ENCODE measurements at regions of chr18 and their contacts with region 1.

Region 1: GRCh38 chr18:37259711-37260110 is 305.9 kb downstream of the CELF4 start:
- DNase-seq: no peak
- H3K4me3 ChIP-seq: no peak overlapping the region
- H3K27ac ChIP-seq: no peak overlapping the region
- H3K4me1 ChIP-seq: peaks cover 1% of the 10 kb centered on the region
- H3K27me3 ChIP-seq: no peaks in the 10 kb centered on the region
- CTCF ChIP-seq: no peak
- POLR2A ChIP-seq: no peak

Region 2: GRCh38 chr18:36872329-36872728 is 387.4 kb before region 1 on chr18:
- intact Hi-C with region 1: no loop called
- DNase-seq: no peak
- H3K4me3 ChIP-seq: no peak overlapping the region
- H3K27ac ChIP-seq: no peak overlapping the region
- H3K4me1 ChIP-seq: no peaks in the 10 kb centered on the region
- H3K27me3 ChIP-seq: no peaks in the 10 kb centered on the region
- CTCF ChIP-seq: no peak
- POLR2A ChIP-seq: no peak

Region 3: GRCh38 chr18:37065254-37065653 is 194.5 kb before region 1 on chr18:
- intact Hi-C with region 1: no loop called
- DNase-seq: no peak
- H3K4me3 ChIP-seq: no peak overlapping the region
- H3K27ac ChIP-seq: no peak overlapping the region
- H3K4me1 ChIP-seq: no peaks in the 10 kb centered on the region
- H3K27me3 ChIP-seq: no peaks in the 10 kb centered on the region
- CTCF ChIP-seq: no peak
- POLR2A ChIP-seq: no peak

Region 4: GRCh38 chr18:38879871-38880270 is 1620.2 kb after region 1 on chr18:
- intact Hi-C with region 1: loop called (anchors 5 kb)
- DNase-seq: no peak
- H3K4me3 ChIP-seq: no peak overlapping the region
- H3K27ac ChIP-seq: no peak overlapping the region
- H3K4me1 ChIP-seq: no peaks in the 10 kb centered on the region
- H3K27me3 ChIP-seq: no peaks in the 10 kb centered on the region
- CTCF ChIP-seq: no peak
- POLR2A ChIP-seq: no peak